ENCODE measurements at regions of chr17 and their contacts with region 1.

Region 1: DNA sequence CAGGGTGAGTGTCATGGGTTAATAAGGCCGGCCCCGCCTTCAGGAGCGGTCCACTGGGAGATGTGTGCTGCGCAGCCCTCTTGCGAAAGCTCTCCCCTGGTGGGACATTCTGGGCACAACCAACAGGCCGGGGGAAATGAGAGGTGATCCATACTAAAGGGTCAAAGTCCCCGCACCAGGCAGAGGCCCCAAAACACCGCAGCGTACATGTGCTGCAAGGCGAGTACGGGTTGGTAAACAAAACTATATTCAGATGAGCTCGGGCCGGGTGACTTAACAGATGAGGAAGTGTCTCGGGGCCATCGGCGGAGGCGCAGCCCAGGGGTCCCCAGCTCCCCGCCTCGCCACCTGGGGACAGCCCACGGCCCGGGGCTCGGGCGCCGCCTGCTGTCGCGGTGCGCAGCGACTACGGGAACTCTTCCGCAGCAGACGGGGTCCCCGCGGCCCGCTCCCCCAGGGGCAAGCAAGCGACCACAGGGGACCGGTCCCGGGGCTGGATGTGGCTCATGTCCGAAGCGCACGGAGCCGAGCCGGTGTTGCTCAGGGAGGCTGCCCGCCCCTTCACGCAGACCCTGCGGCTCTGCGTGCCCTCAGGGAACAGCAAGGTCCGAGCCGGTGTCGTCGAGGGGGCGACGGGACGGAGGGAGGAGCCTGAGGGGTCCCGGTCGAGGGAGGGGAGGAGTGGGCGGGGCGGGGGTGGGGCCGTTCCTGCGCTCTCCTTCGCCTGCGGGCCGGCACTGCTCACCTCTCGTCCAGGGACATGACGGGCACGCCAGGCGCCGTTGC is at the start of gene RAB37:
- DNase-seq: peak in 8 of 14 experiments; percentile 34 to 81 (median 52)
- ATAC-seq: peak; percentile 27
- H3K4me3 ChIP-seq: peak within 1 kb of the TSS; percentile 93
- H3K4me3 Mint-ChIP-seq: peak within 1 kb of the TSS; percentile 95
- H3K27ac ChIP-seq: peak within 1 kb of the TSS; percentile 60 to 70
- H3K27ac Mint-ChIP-seq: peak within 1 kb of the TSS; percentile 91
- H3K4me1 ChIP-seq: peaks cover 77% of the 10 kb centered on the region
- H3K4me1 Mint-ChIP-seq: peaks cover 47% of the 10 kb centered on the region
- H3K27me3 ChIP-seq: no peaks in the 10 kb centered on the region
- H3K27me3 Mint-ChIP-seq: no peaks in the 10 kb centered on the region
- CTCF ChIP-seq: peak; percentile 66
- total RNA-seq, gene RAB37: 19.0 to 21.1 TPM

Region 2: DNA sequence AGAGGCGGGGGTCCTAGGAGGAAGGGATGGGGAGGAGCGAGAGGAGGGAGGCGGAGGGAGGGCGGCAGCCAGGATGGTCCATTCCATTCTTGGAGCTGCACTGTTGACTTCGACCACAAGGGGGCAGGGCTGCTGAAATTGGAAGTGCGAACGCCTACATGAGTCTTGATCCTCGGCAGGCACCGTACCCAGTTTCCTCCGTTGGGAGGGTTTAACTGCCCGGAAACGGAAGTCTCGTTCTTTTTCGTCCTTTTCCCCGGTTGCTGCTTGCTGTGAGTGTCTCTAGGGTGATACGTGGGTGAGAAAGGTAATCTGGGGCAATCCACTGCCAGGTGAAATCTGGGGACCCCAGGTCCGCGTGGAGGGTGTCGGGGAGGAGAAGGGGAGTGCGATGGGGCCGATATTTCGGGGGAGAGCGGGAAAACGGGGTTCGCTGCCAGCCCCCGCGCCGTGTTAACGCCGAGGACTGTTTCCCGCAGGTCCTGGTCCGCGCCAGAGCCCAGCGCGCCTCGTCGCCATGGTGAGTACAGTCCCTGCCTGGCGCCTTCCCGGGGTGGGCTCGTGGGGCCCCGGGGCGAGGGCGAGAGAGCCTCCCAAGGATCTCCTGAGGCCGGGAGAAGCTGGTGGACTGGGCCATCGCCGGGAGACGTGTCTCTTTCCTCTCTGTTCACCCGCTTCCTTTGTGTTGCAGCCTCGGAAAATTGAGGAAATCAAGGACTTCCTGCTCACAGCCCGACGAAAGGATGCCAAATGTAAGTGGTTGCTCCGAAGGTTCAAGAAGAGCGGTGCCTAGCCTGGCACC is 533.1 kb before region 1 on chr17 and contains the start of gene RPL38:
- CTCF ChIA-PET with region 1: no interaction called
- POLR2A ChIA-PET with region 1: no interaction called
- intact Hi-C with region 1: loop called in 1 of 2 experiments (anchors 10 kb)
- DNase-seq: peak; percentile 88 to 97 (median 95)
- ATAC-seq: peak; percentile 85
- H3K4me3 ChIP-seq: peak within 1 kb of the TSS; percentile 97
- H3K4me3 Mint-ChIP-seq: peak within 1 kb of the TSS; percentile 94
- H3K27ac ChIP-seq: peak within 1 kb of the TSS; percentile 69 to 87
- H3K27ac Mint-ChIP-seq: peak within 1 kb of the TSS; percentile 82
- H3K4me1 ChIP-seq: peaks cover 59% of the 10 kb centered on the region
- H3K4me1 Mint-ChIP-seq: peaks cover 44% of the 10 kb centered on the region
- H3K27me3 ChIP-seq: peaks cover 18 to 24% of the 10 kb centered on the region in 2 experiments
- H3K27me3 Mint-ChIP-seq: peaks cover 16% of the 10 kb centered on the region
- CTCF ChIP-seq: peak; percentile 89
- total RNA-seq, gene RPL38: 2,305 to 2,531 TPM

Region 3: GRCh38 chr17:74677558-74678466 is 58.9 kb before region 1 on chr17:
- CTCF ChIA-PET with region 1: no interaction called
- POLR2A ChIA-PET with region 1: interaction called, 11 read pairs
- intact Hi-C with region 1: no loop called
- DNase-seq: peak in 2 of 14 experiments; percentile 10 to 41
- ATAC-seq: peak; percentile 37
- H3K4me3 ChIP-seq: no peak overlapping the region
- H3K4me3 Mint-ChIP-seq: peak overlapping the region; percentile 46
- H3K27ac ChIP-seq: peak overlapping the region in 1 of 2 donors; percentile 4
- H3K27ac Mint-ChIP-seq: peak overlapping the region; percentile 6
- H3K4me1 ChIP-seq: peaks cover 15% of the 10 kb centered on the region
- H3K4me1 Mint-ChIP-seq: peaks cover 23% of the 10 kb centered on the region
- H3K27me3 ChIP-seq: peaks cover 2 to 10% of the 10 kb centered on the region in 2 experiments
- H3K27me3 Mint-ChIP-seq: peaks cover 40% of the 10 kb centered on the region
- CTCF ChIP-seq: no peak

Region 4: GRCh38 chr17:74748529-74749365 is 12.0 kb after region 1 on chr17 and contains the start of gene NHERF1:
- CTCF ChIA-PET with region 1: interaction called, 23 read pairs
- POLR2A ChIA-PET with region 1: interaction called, 89 read pairs
- intact Hi-C with region 1: no loop called
- DNase-seq: peak in 13 of 14 experiments; percentile 83 to 97 (median 94)
- ATAC-seq: peak; percentile 82
- H3K4me3 ChIP-seq: peak within 1 kb of the TSS; percentile 98
- H3K4me3 Mint-ChIP-seq: peak within 1 kb of the TSS; percentile 92
- H3K27ac ChIP-seq: peak within 1 kb of the TSS; percentile 48 to 84
- H3K27ac Mint-ChIP-seq: peak within 1 kb of the TSS; percentile 94
- H3K4me1 ChIP-seq: peaks cover 74% of the 10 kb centered on the region
- H3K4me1 Mint-ChIP-seq: peaks cover 74% of the 10 kb centered on the region
- H3K27me3 ChIP-seq: no peaks in the 10 kb centered on the region
- H3K27me3 Mint-ChIP-seq: no peaks in the 10 kb centered on the region
- CTCF ChIP-seq: no peak
- total RNA-seq, gene NHERF1: 68.4 to 72.4 TPM

Region 5: GRCh38 chr17:74770498-74771318 is 34.0 kb after region 1 on chr17:
- CTCF ChIA-PET with region 1: interaction called, 24 read pairs
- POLR2A ChIA-PET with region 1: interaction called, 28 read pairs
- intact Hi-C with region 1: no loop called
- DNase-seq: peak; percentile 66 to 88 (median 78)
- ATAC-seq: peak; percentile 97
- H3K4me3 ChIP-seq: no peak overlapping the region
- H3K4me3 Mint-ChIP-seq: peak overlapping the region; percentile 54
- H3K27ac ChIP-seq: no peak overlapping the region
- H3K27ac Mint-ChIP-seq: peak overlapping the region; percentile 81
- H3K4me1 ChIP-seq: peaks cover 63% of the 10 kb centered on the region
- H3K4me1 Mint-ChIP-seq: peaks cover 34% of the 10 kb centered on the region
- H3K27me3 ChIP-seq: no peaks in the 10 kb centered on the region
- H3K27me3 Mint-ChIP-seq: no peaks in the 10 kb centered on the region
- CTCF ChIP-seq: peak; percentile 81

Region 6: DNA sequence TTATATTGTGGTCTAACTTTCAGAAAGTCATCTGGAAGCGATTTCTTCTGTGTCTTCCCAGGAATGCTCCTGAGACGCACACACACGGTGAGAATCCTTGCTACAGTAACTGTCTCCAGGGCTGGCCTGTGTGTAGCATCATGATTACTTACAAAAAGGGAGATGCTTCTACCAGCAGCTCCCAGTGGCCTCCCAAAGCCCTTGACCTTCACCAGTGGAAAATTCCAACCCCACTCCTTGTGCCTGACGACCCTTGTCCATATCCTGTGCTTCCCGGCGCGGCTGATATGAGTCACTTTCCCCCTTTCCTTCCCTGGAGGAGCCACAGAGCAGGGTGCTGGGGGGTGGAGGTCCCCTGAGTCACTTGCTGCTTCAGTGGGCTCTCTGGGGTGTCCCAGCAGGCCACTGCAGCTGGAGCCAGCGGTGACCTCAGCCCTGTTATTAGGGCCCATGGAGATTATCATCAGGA is 61.6 kb after region 1 on chr17:
- CTCF ChIA-PET with region 1: no interaction called
- POLR2A ChIA-PET with region 1: no interaction called
- intact Hi-C with region 1: no loop called
- DNase-seq: no peak
- ATAC-seq: no peak
- H3K4me3 ChIP-seq: no peak overlapping the region
- H3K4me3 Mint-ChIP-seq: no peak overlapping the region
- H3K27ac ChIP-seq: no peak overlapping the region
- H3K27ac Mint-ChIP-seq: no peak overlapping the region
- H3K4me1 ChIP-seq: no peaks in the 10 kb centered on the region
- H3K4me1 Mint-ChIP-seq: no peaks in the 10 kb centered on the region
- H3K27me3 ChIP-seq: no peaks in the 10 kb centered on the region
- H3K27me3 Mint-ChIP-seq: no peaks in the 10 kb centered on the region
- CTCF ChIP-seq: no peak

Measured in CD4-positive, alpha-beta T cell (primary cell).